ENCODE measurements at regions of chr3 and their contacts with region 1.

Region 1: GRCh38 chr3:183265834-183266417 is 12.9 kb downstream of the B3GNT5 start:
- DNase-seq: peak; percentile 80
- ATAC-seq: peak; percentile 93
- H3K4me3 Mint-ChIP-seq: no peak overlapping the region
- H3K27ac Mint-ChIP-seq: no peak overlapping the region
- H3K4me1 Mint-ChIP-seq: peaks cover 28% of the 10 kb centered on the region
- H3K27me3 Mint-ChIP-seq: no peaks in the 10 kb centered on the region
- CTCF ChIP-seq: no peak

Region 2: DNA sequence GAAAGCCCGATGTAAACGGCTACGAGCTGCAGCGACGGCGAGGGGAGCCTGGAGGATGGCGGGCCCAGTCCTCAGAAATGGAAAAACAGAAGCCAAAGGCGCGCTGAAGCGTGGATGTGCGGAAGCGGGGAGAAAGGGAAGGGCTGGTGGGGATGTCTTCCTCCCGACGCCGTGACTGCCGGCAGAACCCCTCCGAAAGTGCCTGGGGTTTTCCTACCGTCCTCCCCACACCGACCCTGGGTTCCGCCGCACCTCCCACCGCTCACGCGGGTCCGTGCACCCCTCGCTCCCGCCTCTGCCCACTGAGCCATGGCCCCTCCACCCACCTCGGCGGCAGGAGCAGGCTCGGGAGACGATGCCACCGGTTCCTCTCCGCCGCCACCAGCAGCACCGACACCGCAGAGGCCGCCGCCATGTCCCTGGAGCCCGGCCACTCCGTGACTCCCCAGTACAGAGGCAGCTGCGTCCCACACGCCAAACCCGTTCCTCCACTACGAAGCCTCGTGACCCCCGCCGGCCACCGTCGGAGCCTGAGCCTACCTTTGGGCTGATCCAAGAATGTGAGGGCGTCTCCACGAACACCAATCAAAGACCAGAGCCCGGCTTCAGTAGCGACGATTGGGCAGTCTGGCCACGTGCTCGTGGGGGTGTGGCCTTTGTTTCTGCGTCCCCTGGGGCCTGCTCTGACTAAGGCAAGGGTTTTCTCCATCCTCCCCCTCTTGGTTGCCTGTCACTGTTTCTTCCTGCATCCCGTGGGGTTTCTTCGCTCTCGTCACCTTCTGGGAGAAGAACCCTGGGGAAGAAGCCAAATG is 166.7 kb before region 1 on chr3 and contains the start of gene MCCC1:
- CTCF ChIA-PET with region 1: no interaction called
- POLR2A ChIA-PET with region 1: no interaction called
- intact Hi-C with region 1: no loop called
- DNase-seq: peak; percentile 99
- ATAC-seq: peak; percentile 99
- H3K4me3 Mint-ChIP-seq: peak within 1 kb of the TSS; percentile 96
- H3K27ac Mint-ChIP-seq: peak within 1 kb of the TSS; percentile 97
- H3K4me1 Mint-ChIP-seq: peaks cover 41% of the 10 kb centered on the region
- H3K27me3 Mint-ChIP-seq: no peaks in the 10 kb centered on the region
- CTCF ChIP-seq: no peak
- total RNA-seq, gene MCCC1: 35.0 to 38.0 TPM

Region 3: DNA sequence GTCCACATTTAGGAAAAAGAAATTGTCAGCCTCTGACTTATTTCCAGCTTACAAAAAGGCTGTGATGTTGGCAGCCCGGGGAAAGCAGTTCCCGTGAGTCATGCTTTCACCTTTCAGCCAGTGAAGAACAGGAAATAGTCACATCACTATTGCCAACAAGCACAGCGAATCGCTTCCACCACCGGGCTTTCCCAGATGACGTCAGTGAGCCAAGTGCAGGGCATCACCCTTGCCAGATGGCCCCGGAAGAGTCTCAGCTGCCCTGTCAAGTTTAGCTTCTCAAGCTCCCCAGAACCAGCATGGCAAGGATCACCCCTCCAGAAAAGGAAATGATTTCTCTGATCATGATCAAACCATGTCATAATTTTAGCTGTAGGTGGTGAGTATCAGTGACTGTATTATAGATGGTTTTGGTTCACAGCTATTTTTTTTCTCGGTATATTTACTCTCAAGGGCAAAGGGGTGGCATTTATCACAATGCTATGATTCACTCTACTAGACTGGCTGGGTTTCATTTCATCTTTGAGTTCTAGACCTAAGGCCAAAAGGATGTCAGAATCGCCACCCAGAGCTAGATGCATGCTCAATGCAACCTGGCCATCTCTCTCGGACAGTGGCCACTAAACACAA is 20.0 kb after region 1 on chr3:
- CTCF ChIA-PET with region 1: interaction called, 7 read pairs
- POLR2A ChIA-PET with region 1: interaction called, 19 read pairs
- intact Hi-C with region 1: loop called (anchors 1 kb)
- DNase-seq: peak; percentile 98
- ATAC-seq: peak; percentile 90
- H3K4me3 Mint-ChIP-seq: peak overlapping the region; percentile 61
- H3K27ac Mint-ChIP-seq: peak overlapping the region; percentile 97
- H3K4me1 Mint-ChIP-seq: peaks cover 40% of the 10 kb centered on the region
- H3K27me3 Mint-ChIP-seq: no peaks in the 10 kb centered on the region
- CTCF ChIP-seq: no peak